Astrocyte of the cerebellum (primary cell): ENCODE measurements at regions of chr1 and their contacts with region 1.

Region 1: DNA sequence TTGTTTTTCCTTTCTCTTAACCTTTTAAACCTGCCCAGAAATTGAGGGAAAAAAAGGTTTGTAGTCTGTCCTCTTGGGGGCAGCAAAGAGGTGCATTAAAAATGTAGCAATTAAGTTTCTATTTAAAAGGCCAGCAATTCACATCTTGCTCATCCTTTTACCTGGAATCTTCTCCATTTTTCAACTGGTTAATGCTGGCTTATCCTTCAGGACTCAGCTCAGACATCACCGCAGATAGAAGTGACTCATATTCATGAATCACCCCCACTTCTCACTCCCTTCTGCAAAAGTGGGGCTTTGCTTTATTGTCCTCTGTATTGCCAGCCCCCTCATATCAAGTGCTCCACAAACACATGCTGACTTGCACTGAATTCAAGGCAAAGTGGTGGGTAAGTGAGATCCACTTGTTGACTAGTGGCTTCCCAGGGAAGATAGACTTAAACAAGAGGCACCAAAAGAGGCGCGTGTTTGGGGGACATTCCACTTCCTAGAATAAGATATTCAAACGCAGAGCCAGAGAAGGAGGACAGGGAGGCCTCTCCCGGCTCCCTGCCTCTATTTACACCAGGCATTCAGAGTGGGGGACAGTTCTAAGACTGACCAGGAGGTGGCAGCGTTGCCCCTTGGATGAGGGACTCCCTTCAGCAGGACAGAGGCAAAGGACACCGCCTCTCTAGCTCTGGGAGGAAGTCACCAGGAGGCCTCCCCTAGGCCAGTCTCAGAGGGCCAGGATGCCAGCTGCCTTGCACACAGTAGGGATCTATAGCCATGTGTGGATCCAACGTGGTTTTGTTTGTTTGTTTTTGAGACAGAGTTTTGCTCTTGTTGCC is 23.2 kb upstream of the ZNF648 start:
- DNase-seq: peak; percentile 51
- H3K4me3 ChIP-seq: no peak overlapping the region
- CTCF ChIP-seq: peak; percentile 91

Region 2: GRCh38 chr1:182397771-182398393 is 313.2 kb after region 1 on chr1:
- in situ Hi-C with region 1: loop called (anchors 5 kb)
- DNase-seq: no peak
- H3K4me3 ChIP-seq: no peak overlapping the region
- CTCF ChIP-seq: no peak

Region 3: GRCh38 chr1:183901748-183902330 is 1817.1 kb after region 1 on chr1:
- in situ Hi-C with region 1: no loop called
- DNase-seq: no peak
- H3K4me3 ChIP-seq: no peak overlapping the region
- CTCF ChIP-seq: no peak